Breast epithelium (tissue), 4 donors: ENCODE measurements at regions of chr13 and their contacts with region 1.

Region 1: DNA sequence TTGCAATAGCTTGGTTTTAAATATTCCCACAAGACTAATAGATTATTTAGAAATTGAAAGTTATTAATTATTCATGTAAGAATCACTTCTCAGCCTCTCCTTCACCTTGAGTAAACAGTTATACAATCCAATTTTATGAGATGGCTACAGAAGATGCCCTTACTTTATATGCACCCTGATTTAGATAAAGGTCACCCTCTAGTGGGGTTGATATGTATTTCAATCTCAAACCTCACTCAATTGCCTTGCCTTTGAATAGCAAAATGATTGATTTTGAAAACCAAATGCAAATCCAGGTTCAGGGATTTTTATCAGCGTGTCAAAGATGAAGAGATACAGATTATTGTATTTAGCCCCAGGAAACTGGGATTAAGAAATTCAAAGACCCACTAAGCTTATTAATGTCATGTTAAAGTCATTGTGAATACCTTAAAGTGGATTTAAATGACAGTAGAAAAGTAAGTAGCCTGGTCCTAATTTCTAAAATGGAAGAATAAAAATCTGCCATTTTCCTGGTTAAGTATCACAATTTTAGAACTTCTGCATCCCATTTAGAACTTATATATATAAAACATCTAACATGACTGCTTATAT is 305.1 kb downstream of the ITGBL1 start:
- DNase-seq: no peak
- H3K4me3 ChIP-seq: no peak overlapping the region
- H3K27ac ChIP-seq: no peak overlapping the region
- H3K4me1 ChIP-seq: no peaks in the 10 kb centered on the region
- H3K27me3 ChIP-seq: no peaks in the 10 kb centered on the region
- CTCF ChIP-seq: peak in 2 of 3 donors; percentile 49 to 55
- POLR2A ChIP-seq: no peak

Region 2: GRCh38 chr13:102484329-102484728 is 726.8 kb after region 1 on chr13:
- intact Hi-C with region 1: loop called (anchors 5 kb)
- DNase-seq: no peak
- H3K4me3 ChIP-seq: no peak overlapping the region
- H3K27ac ChIP-seq: no peak overlapping the region
- H3K4me1 ChIP-seq: no peaks in the 10 kb centered on the region
- H3K27me3 ChIP-seq: no peaks in the 10 kb centered on the region
- CTCF ChIP-seq: no peak
- POLR2A ChIP-seq: no peak